ENCODE measurements at regions of chr3 and their contacts with region 1.

Region 1: GRCh38 chr3:50272911-50273693 is 4.2 kb downstream of the SEMA3B start:
- DNase-seq: peak; percentile 70 to 92 (median 87)
- H3K4me3 ChIP-seq: peak overlapping the region in 1 of 4 donors; percentile 30
- H3K27ac ChIP-seq: peak overlapping the region in 3 of 5 donors; percentile 19 to 43 (median 39)
- H3K4me1 ChIP-seq: peaks cover 45 to 48% of the 10 kb centered on the region in 2 donors
- H3K27me3 ChIP-seq: peaks cover 4% of the 10 kb centered on the region
- CTCF ChIP-seq: peak; percentile 97 to 99 (median 98)
- POLR2A ChIP-seq: peak in 1 of 2 donors; percentile 9

Region 2: DNA sequence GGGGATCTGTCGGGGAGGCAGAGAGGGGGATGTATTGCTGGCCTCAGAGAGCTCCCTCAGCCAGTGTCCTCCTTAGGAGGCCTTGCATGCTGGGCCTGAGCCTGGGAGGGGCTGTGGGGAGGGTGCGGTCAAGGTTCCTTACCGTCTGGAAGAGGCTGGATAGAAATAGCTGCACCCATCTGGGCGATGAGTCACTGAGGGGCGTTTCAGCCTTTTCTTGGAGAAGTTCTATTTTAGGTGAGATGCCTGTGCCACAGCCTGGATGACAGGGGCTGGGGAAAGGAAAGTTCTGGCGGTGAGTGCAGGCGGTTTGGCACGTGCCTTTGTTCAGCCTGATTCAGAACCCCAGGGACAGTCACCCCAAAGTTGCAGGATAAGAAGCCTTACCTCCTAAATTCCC is 634.7 kb before region 1 on chr3:
- intact Hi-C with region 1: no loop called
- DNase-seq: peak; percentile 47 to 81 (median 56)
- H3K4me3 ChIP-seq: no peak overlapping the region
- H3K27ac ChIP-seq: no peak overlapping the region
- H3K4me1 ChIP-seq: peaks cover 5 to 9% of the 10 kb centered on the region in 2 donors
- H3K27me3 ChIP-seq: no peaks in the 10 kb centered on the region
- CTCF ChIP-seq: no peak
- POLR2A ChIP-seq: no peak

Region 3: DNA sequence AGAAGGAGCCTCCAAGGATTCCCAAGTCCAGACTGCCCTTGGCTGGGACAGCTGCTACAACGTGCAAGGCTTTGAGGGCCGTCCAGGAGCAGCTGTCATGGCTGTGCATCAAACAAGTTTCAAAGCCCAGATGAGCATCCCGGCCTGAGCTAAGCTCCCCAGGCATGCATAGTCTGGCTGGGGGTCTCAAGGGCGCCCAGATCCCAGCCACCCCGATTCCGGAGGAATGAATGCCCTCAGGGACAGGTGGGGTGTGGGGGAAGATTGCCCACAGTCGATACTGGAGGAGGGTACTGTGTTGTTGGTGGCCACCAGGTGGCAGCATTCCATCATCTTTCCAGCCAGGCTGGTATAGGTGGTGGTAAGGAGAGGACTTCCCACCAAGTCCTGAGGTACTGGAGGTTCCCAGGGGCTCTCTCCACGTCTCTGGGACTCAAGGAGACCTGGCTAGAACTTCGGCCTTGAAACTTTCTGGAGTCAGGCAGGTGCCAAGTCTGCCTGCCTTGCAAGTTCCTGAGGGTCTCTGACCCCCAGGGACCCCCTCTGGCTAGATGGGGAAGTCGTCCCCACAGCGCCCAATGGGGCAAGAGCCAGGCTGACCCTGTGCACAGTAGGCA is 151.6 kb before region 1 on chr3:
- intact Hi-C with region 1: loop called in 1 of 2 experiments (anchors 10 kb)
- DNase-seq: peak; percentile 71 to 87 (median 76)
- H3K4me3 ChIP-seq: no peak overlapping the region
- H3K27ac ChIP-seq: no peak overlapping the region
- H3K4me1 ChIP-seq: no peaks in the 10 kb centered on the region
- H3K27me3 ChIP-seq: no peaks in the 10 kb centered on the region
- CTCF ChIP-seq: peak; percentile 75 to 88 (median 84)
- POLR2A ChIP-seq: no peak

Region 4: GRCh38 chr3:50192689-50193141 is 80.4 kb before region 1 on chr3:
- intact Hi-C with region 1: loop called in 1 of 2 experiments (anchors 5 kb)
- DNase-seq: peak; percentile 45 to 89 (median 71)
- H3K4me3 ChIP-seq: no peak overlapping the region
- H3K27ac ChIP-seq: no peak overlapping the region
- H3K4me1 ChIP-seq: peaks cover 0 to 7% of the 10 kb centered on the region in 2 donors
- H3K27me3 ChIP-seq: peaks cover 25% of the 10 kb centered on the region
- CTCF ChIP-seq: peak; percentile 82 to 91 (median 90)
- POLR2A ChIP-seq: no peak

Region 5: DNA sequence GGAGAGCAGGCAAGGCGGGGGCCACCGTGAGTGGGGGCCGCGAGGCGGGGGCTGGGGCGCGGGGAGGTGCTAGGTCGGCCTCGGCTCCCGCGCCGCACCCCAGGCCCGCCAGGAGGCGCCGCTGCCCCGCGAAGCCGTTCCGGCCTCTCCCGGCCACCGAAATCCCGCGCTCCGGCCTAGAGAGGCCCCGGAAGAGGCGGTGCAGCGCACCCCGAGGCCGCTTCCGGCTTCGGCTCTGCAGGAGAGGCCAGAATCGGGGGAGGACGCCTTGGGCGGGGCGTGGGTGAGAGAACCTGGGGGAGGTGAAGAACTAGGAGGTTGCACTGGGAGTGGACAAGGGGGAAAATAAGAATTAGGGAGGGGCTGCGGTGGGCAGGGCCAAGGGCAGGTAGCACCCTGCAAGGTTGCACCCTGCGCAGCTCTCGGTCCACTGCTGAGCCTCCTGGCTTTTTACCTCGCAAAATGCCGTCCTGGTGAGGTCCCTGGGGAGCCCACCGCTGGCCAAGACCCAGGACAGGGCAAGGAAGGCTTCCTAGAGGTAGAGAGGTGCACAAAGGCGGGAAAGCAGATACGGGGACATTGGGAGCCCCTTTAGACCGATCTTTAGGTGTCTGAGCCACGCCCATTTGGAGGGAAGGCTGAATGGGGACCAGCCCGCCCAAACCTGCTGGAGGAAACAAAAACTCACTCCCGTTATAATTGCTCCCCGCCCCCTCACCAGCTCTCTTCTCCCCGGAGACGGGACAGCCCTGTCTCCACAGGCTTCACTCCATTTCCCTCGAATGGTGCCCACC is 45.5 kb before region 1 on chr3:
- intact Hi-C with region 1: loop called (anchors 5 kb)
- DNase-seq: peak; percentile 87 to 91 (median 90)
- H3K4me3 ChIP-seq: peak overlapping the region; percentile 32 to 82 (median 66)
- H3K27ac ChIP-seq: peak overlapping the region in 3 of 5 donors; percentile 6 to 49 (median 48)
- H3K4me1 ChIP-seq: peaks cover 0 to 16% of the 10 kb centered on the region in 2 donors
- H3K27me3 ChIP-seq: no peaks in the 10 kb centered on the region
- CTCF ChIP-seq: peak; percentile 47 to 93 (median 76)
- POLR2A ChIP-seq: peak in 1 of 2 donors; percentile 25

Region 6: DNA sequence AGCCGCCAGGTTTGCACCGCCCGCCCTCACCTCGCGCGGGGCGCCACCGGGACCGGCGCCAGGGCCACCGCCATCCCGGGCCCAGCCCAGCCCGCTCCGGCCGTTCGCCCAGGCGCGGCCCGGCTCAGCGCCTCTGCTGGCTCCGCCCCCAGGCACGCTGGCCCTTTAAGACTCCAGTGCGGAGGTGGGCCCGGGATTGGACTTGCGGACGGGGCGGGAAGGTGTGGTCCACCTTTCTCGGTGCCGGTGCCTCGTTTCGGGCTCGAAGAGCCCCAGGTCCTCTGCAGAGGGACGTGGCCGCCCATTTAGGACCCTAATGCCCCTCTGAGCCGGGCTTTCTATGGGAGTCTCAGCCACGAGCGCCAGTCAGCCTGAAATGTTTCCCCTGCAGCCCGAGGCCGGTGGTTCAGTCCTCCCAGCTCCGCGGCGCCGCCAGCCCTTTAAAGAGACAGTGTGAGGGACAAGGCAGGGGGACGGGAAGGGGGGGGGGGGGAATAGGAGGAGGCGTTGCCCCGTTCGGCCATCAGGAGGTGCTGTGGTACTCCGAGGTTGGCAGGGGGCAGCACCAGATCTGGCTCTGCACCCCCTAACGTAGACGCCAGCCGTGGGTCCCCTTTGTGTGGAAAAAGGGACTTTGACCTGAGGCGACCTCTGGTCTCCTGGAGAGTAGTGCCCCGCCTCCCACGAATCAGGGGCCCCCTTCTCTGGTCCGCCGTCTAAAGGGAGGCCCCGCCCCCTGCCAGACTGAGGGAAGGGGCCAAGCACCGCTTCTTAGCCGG is 48.4 kb after region 1 on chr3:
- intact Hi-C with region 1: loop called in 1 of 2 experiments (anchors 5 kb)
- DNase-seq: peak; percentile 89 to 94 (median 91)
- H3K4me3 ChIP-seq: peak overlapping the region; percentile 25 to 96 (median 62)
- H3K27ac ChIP-seq: peak overlapping the region; percentile 83 to 98 (median 94)
- H3K4me1 ChIP-seq: peaks cover 44 to 73% of the 10 kb centered on the region in 2 donors
- H3K27me3 ChIP-seq: no peaks in the 10 kb centered on the region
- CTCF ChIP-seq: peak; percentile 20 to 66 (median 32)
- POLR2A ChIP-seq: peak; percentile 36 to 69

Region 7: GRCh38 chr3:50388016-50388719 is 115.1 kb after region 1 on chr3:
- intact Hi-C with region 1: no loop called
- DNase-seq: no peak
- H3K4me3 ChIP-seq: no peak overlapping the region
- H3K27ac ChIP-seq: no peak overlapping the region
- H3K4me1 ChIP-seq: peaks cover 4 to 10% of the 10 kb centered on the region in 2 donors
- H3K27me3 ChIP-seq: no peaks in the 10 kb centered on the region
- CTCF ChIP-seq: no peak
- POLR2A ChIP-seq: no peak

Measured in adrenal gland (tissue), 19 donors.